ENCODE measurements at regions of chr16 and their contacts with region 1.

Region 1: DNA sequence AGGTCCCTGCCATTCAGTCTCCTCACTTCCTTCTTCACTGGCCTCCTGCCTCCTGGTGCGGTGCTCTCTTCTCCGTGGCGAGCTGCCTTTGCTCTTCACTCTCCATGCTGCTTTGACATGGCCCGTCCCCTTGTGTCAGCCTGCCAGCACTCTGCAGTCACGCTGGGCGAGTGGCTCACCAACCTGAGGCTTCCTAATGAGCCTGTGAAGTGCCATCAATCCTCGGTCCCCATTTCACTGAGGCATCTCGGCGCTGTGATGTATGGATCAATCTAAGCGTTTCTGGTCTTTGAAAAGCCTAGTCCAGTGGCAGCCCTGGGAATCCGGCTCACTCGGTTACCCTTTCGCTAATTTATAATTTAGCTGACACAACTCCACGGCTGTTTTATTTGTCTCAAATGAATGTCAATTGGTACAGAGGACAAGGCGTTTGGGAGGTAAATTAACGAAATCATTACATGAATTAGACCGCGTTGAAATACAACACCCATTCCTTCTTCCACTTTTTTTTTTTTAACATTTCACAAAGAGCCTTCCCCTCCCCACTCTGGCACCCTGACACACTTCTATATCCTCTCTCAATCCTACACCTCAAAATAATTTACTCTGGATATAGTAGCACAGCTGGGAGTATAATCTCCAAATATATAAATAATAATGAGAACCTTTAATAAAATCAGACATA is 610.7 kb downstream of the TMEM114 start:
- DNase-seq: no peak
- ATAC-seq: no peak
- H3K4me3 ChIP-seq: no peak overlapping the region
- H3K27ac ChIP-seq: no peak overlapping the region
- H3K4me1 ChIP-seq: no peaks in the 10 kb centered on the region
- H3K27me3 ChIP-seq: no peaks in the 10 kb centered on the region
- CTCF ChIP-seq: no peak
- POLR2A ChIP-seq: no peak

Region 2: DNA sequence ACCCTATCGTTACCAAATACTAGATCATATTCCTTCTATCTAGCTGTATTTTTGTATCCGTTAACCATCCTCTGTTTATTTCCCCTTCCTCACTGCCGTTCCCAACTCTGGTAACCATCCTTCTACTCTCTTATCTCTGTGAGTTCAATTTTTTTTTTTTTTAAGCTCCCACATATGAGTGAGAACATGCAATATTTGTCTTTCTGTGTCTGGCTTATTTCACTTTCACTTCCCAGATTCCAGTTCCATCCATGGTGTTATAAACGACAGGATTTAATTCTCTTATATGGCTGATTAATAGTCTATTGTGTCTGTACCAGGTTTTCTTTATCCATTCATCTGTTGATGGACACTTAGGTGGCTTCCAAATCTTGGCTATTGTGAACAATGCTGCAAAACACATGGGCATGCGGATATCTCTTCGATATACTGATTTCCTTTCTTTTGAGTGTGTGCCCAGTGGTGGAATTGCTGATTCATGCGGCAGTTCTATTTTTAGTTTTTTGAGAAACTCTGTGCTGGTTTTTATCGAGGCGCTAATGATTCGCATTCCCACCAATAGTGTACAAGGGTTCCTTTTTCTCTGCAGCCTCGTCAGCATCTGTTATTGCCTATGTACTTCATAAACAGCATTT is 11.2 kb after region 1 on chr16:
- intact Hi-C with region 1: no loop called
- DNase-seq: peak in 1 of 5 donors; percentile 7
- ATAC-seq: peak in 3 of 4 donors; percentile 53 to 58 (median 55)
- H3K4me3 ChIP-seq: peak overlapping the region in 6 of 12 donors; percentile 13 to 33 (median 28)
- H3K27ac ChIP-seq: peak overlapping the region in 1 of 12 donors; percentile 7
- H3K4me1 ChIP-seq: peaks cover 0 to 6% (median 0%) of the 10 kb centered on the region in 12 donors
- H3K27me3 ChIP-seq: no peaks in the 10 kb centered on the region
- CTCF ChIP-seq: no peak
- POLR2A ChIP-seq: no peak

Region 3: DNA sequence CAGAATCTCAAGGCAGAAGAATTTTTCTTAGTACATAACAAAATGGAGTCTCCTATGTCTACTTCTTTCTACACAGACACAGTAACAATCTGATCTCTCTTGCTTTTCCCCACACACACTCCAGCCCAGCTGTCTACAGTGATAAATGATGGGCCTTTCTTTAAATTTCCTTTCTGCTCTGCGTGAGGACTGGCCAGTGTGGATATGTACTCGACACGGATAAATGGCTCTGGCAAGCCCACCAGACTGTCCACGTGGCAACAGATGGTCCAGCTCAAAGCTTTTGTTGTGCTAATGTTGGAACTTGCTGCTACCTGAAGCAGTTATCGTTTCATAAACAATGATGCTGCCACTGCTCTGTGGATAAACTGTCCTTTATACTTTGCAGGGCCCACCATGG is 200.0 kb after region 1 on chr16:
- intact Hi-C with region 1: loop called in 1 of 10 experiments (anchors 10 kb)
- DNase-seq: no peak
- ATAC-seq: no peak
- H3K4me3 ChIP-seq: no peak overlapping the region
- H3K27ac ChIP-seq: no peak overlapping the region
- H3K4me1 ChIP-seq: no peaks in the 10 kb centered on the region
- H3K27me3 ChIP-seq: peaks cover 0 to 11% (median 0%) of the 10 kb centered on the region in 9 donors
- CTCF ChIP-seq: no peak
- POLR2A ChIP-seq: no peak